H1 (cell line): ENCODE measurements at regions of chr17 and their contacts with region 1.

Region 1: DNA sequence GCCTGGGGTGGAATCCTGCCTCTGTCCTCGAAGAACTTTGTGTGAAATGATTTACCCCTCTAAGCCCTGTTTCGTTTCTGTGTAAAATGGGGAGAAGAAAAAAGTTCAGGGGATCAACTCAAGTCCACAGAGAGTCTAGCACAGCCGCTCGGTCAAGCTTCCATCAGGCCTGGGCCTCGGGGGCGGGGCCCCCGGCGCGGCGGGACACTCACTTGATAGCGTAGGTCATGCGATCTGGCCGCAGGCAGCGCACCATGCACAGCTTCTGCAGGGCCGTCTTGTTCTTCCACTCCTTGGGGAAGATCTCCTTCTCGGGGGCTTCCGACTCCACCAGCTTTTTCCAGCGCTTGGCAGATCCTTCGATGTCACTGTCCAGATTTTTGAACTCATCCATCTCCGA is 65.9 kb downstream of the PGS1 start:
- DNase-seq: no peak
- H3K4me3 ChIP-seq: no peak overlapping the region
- H3K27ac ChIP-seq: no peak overlapping the region
- H3K4me1 ChIP-seq: no peaks in the 10 kb centered on the region; a peak in 1 of 7 replicates
- H3K27me3 ChIP-seq: no peaks in the 10 kb centered on the region
- CTCF ChIP-seq: no peak
- EP300 ChIP-seq: no peak
- POLR2A ChIP-seq: no peak
- RAD21 ChIP-seq: no peak

Region 2: DNA sequence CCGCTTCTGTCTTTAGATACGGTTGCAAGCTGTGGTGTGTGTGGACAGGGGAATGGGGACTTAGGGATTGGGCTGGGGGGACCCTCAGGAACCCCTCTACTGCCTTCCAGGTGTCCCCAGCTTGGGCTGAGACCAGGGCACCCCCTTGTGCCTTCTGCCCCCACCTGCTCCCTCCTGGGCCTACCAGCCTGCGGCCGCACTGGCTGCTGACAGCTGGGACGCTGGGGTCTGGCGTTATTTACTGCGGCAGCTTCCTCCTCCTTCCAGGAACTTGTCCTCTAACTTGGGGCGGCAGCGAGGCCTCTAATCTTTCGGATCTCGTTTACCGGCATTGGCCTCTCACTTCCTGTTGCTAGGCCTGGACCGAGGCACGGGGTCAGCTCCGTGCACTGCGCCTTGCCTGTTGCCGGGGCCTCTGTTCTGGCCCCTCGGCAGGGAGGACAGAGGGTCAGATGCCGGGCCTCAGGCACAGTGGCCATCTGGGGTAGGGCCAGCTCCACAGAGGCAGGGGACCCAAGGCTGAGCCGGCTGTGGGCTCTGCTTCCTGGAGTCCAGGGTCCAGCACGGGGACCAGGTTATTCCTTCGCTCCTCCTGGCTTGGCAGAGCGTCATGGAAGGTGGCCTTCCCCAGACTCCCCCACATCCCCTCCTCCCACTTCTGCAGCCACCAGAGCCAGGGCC is 181.2 kb before region 1 on chr17:
- CTCF ChIA-PET with region 1: no interaction called
- POLR2A ChIA-PET with region 1: no interaction called
- DNase-seq: peak in 1 of 2 experiments; percentile 49
- H3K4me3 ChIP-seq: no peak overlapping the region
- H3K27ac ChIP-seq: no peak overlapping the region
- H3K4me1 ChIP-seq: peaks cover 0 to 29% (median 22%) of the 10 kb centered on the region in 4 experiments; a peak in 6 of 7 replicates
- H3K27me3 ChIP-seq: no peaks in the 10 kb centered on the region; a peak in 2 of 7 replicates
- CTCF ChIP-seq: no peak
- EP300 ChIP-seq: no peak
- POLR2A ChIP-seq: no peak
- RAD21 ChIP-seq: no peak

Region 3: GRCh38 chr17:78432226-78433012 is 12.0 kb before region 1 on chr17:
- CTCF ChIA-PET with region 1: interaction called, 16 read pairs
- POLR2A ChIA-PET with region 1: interaction called, 4 read pairs
- DNase-seq: no peak
- H3K4me3 ChIP-seq: no peak overlapping the region
- H3K27ac ChIP-seq: no peak overlapping the region
- H3K4me1 ChIP-seq: peaks cover 0 to 33% (median 20%) of the 10 kb centered on the region in 4 experiments; a peak in 6 of 7 replicates
- H3K27me3 ChIP-seq: no peaks in the 10 kb centered on the region
- CTCF ChIP-seq: no peak
- EP300 ChIP-seq: no peak
- POLR2A ChIP-seq: 0 out of 3 replicates have a peak, but pooled peaks of 1 of the 2 experiments have one; percentile 3
- RAD21 ChIP-seq: no peak

Region 4: DNA sequence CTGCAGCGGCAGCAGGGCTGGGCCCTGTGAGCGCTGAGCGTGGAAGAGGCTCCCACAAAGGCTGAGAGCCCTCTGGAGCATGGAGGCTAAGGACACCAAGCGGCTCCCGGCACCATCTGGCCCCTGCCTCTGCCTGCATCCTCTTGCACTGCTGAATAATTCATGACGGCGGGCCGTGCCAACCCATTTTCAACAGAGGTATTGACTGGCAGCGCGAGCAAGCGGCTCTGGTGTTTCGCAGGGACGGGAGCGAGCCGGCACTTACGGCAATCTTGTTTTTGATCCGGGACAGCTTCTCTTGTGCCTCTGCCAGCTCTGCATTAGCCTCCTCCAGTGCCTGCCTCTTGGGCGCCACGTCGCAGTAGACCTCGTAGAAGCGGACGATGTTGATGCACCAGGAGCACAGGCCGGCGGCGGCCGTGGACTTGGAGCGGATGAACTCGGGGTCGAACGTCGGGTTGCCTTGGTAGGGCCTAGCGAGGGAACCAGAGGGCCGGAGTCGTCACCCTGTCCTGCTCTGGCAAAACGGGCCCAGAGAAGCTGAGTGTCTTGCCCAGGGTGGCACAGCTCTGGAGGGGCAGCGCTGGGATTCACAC is 14.4 kb after region 1 on chr17:
- CTCF ChIA-PET with region 1: interaction called, 19 read pairs
- POLR2A ChIA-PET with region 1: interaction called, 3 read pairs
- DNase-seq: no peak
- H3K4me3 ChIP-seq: no peak overlapping the region
- H3K27ac ChIP-seq: no peak overlapping the region
- H3K4me1 ChIP-seq: no peaks in the 10 kb centered on the region
- H3K27me3 ChIP-seq: no peaks in the 10 kb centered on the region
- CTCF ChIP-seq: no peak
- EP300 ChIP-seq: no peak
- POLR2A ChIP-seq: no peak
- RAD21 ChIP-seq: no peak

Region 5: GRCh38 chr17:78484300-78485246 is 40.2 kb after region 1 on chr17:
- CTCF ChIA-PET with region 1: interaction called, 10 read pairs
- POLR2A ChIA-PET with region 1: no interaction called
- DNase-seq: peak in 1 of 2 experiments; percentile 96
- H3K4me3 ChIP-seq: peak overlapping the region; percentile 53 to 74 (median 68)
- H3K27ac ChIP-seq: no peak overlapping the region
- H3K4me1 ChIP-seq: peaks cover 0 to 10% (median 8%) of the 10 kb centered on the region in 4 experiments; a peak in 5 of 7 replicates
- H3K27me3 ChIP-seq: peaks cover 0 to 3% (median 0%) of the 10 kb centered on the region in 4 experiments; a peak in 2 of 7 replicates
- CTCF ChIP-seq: no peak
- EP300 ChIP-seq: no peak
- POLR2A ChIP-seq: no peak
- RAD21 ChIP-seq: no peak